Activated B cell treated with CpG ODN at 0.5 μM for 24 hours (primary cell): ENCODE measurements at regions of chr13 and their contacts with region 1.

Region 1: GRCh38 chr13:77042566-77043178 is 15.7 kb upstream of the FBXL3 start:
- DNase-seq: no peak
- ATAC-seq: no peak
- H3K4me3 Mint-ChIP-seq: no peak overlapping the region
- H3K27ac Mint-ChIP-seq: peak overlapping the region; percentile 46
- H3K4me1 Mint-ChIP-seq: no peaks in the 10 kb centered on the region
- H3K27me3 Mint-ChIP-seq: no peaks in the 10 kb centered on the region
- CTCF ChIP-seq: no peak

Region 2: DNA sequence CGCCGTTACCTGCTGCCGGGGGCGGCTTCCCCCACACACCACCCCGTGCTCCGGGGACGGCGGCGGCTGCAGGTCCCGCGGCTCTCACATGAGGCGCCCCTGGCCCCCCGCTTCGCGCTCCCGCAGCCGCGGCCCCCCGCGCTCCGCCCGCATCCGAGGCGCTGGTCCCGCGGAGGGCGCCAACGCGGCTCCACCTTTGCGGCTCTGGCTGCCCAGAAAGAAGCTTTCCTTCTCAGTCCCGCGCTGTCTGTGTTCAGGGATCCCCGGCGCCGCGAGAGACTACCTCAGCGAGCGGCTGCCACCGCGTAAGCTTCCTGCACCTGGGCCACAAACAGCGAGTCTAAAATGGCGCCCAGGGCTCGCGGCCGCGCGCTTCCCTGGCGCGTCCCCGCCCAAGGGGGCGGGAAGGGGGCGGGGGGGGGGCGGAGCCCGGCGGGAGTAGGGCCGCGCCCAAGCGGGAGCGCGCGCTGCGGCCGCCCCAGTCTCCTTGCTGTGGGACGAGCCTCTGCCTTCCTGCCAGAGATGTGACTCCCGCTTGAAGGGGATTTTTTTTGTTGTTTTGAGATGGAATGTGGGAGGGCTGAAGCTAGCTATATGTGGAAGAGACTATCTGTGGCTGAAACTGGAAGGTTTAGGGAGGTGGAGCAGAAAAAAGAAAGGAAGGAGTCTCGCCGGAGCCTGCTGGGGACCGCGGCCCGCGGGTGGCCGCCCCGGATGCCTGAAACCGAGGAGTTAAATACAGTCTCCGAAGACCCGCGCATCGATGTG is 15.7 kb before region 1 on chr13 and contains the start of gene FBXL3:
- CTCF ChIA-PET with region 1: no interaction called
- POLR2A ChIA-PET with region 1: interaction called, 10 read pairs
- intact Hi-C with region 1: no loop called
- DNase-seq: peak; percentile 73
- ATAC-seq: peak; percentile 59
- H3K4me3 Mint-ChIP-seq: peak within 1 kb of the TSS; percentile 98
- H3K27ac Mint-ChIP-seq: peak within 1 kb of the TSS; percentile 96
- H3K4me1 Mint-ChIP-seq: peaks cover 54% of the 10 kb centered on the region
- H3K27me3 Mint-ChIP-seq: no peaks in the 10 kb centered on the region
- CTCF ChIP-seq: no peak
- total RNA-seq, gene FBXL3: 46.2 and 49.8 TPM in 2 replicates